Heart right ventricle (tissue), 16 donors: ENCODE measurements at regions of chr12 and their contacts with region 1.

Region 1: DNA sequence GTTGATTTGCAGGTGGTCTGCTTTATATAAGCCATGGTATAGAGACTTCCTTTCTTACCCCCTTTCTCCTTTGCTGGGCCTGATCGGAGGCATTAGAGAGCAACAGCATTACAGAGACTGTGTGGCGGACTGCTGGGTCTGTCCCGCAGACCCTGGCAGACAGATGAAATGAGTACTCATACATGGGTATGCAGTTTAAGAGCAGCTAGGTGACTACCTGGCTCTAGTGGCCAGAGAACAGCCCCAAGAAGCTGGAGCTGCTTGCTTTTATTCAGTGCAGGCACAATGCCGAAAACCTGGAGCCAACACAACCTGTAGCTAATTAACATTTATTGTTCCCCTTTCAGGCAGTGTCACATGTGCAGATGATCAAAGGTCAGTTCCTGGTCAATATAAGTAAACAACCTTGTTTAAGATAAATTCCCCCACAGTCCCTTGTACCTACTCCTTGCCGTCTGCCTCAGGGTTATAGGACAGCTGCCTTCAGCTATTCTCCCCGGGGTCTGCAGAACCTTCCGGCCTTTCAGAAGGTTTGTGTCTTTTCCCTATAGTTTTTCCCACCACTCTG is 160.0 kb downstream of the TRHDE start:
- DNase-seq: no peak
- ATAC-seq: no peak
- H3K4me3 ChIP-seq: no peak overlapping the region
- H3K27ac ChIP-seq: no peak overlapping the region
- H3K4me1 ChIP-seq: no peaks in the 10 kb centered on the region
- H3K27me3 ChIP-seq: no peaks in the 10 kb centered on the region
- CTCF ChIP-seq: no peak

Region 2: GRCh38 chr12:71958993-71959578 is 473.0 kb before region 1 on chr12:
- intact Hi-C with region 1: loop called in 1 of 10 experiments (anchors 10 kb)
- DNase-seq: no peak
- ATAC-seq: no peak
- H3K4me3 ChIP-seq: no peak overlapping the region
- H3K27ac ChIP-seq: no peak overlapping the region
- H3K4me1 ChIP-seq: no peaks in the 10 kb centered on the region
- H3K27me3 ChIP-seq: peaks cover 0 to 16% (median 0%) of the 10 kb centered on the region in 7 donors
- CTCF ChIP-seq: no peak